Activated naive CD4-positive, alpha-beta T cell treated with anti-CD3 and anti-CD28 coated beads, Interleukin-2, amount 10 ng/mL, durations not matched to agents 7 days and 5 days (primary cell): ENCODE measurements at regions of chr20 and their contacts with region 1.

Region 1: GRCh38 chr20:2523919-2524708 is 12.3 kb upstream of the TMC2 start:
- DNase-seq: peak; percentile 94
- H3K4me3 Mint-ChIP-seq: peak overlapping the region; percentile 85
- H3K27ac Mint-ChIP-seq: peak overlapping the region; percentile 88
- H3K4me1 Mint-ChIP-seq: peaks cover 25% of the 10 kb centered on the region
- H3K27me3 Mint-ChIP-seq: peaks cover 50% of the 10 kb centered on the region

Region 2: DNA sequence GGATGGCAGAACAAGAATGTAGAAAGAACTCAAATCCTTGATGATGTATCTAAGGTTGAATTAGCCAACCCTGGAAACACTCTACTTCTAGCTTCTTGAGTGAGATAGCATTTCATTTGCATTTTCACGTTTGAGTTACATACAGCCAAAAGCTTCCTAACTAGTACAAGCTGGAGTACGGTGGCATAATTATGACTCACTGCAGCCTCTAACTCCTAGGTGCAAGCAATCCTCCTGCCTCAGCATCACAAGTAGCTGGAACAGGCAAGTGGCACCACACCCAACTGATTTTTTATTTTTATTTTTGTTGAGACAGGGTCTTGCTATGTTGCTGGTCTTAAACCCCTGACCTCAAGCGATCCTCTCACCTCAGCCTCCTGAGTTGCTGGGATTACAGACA is 459.0 kb before region 1 on chr20:
- CTCF ChIA-PET with region 1: no interaction called
- DNase-seq: no peak
- H3K4me3 Mint-ChIP-seq: no peak overlapping the region
- H3K27ac Mint-ChIP-seq: no peak overlapping the region
- H3K4me1 Mint-ChIP-seq: no peaks in the 10 kb centered on the region
- H3K27me3 Mint-ChIP-seq: peaks cover 8% of the 10 kb centered on the region

Region 3: GRCh38 chr20:2470423-2471193 is 53.5 kb before region 1 on chr20 and contains the start of gene SNRPB:
- CTCF ChIA-PET with region 1: interaction called, 30 read pairs
- DNase-seq: peak; percentile 98
- H3K4me3 Mint-ChIP-seq: peak within 1 kb of the TSS; percentile 93
- H3K27ac Mint-ChIP-seq: peak within 1 kb of the TSS; percentile 97
- H3K4me1 Mint-ChIP-seq: peaks cover 47% of the 10 kb centered on the region
- H3K27me3 Mint-ChIP-seq: no peaks in the 10 kb centered on the region

Region 4: DNA sequence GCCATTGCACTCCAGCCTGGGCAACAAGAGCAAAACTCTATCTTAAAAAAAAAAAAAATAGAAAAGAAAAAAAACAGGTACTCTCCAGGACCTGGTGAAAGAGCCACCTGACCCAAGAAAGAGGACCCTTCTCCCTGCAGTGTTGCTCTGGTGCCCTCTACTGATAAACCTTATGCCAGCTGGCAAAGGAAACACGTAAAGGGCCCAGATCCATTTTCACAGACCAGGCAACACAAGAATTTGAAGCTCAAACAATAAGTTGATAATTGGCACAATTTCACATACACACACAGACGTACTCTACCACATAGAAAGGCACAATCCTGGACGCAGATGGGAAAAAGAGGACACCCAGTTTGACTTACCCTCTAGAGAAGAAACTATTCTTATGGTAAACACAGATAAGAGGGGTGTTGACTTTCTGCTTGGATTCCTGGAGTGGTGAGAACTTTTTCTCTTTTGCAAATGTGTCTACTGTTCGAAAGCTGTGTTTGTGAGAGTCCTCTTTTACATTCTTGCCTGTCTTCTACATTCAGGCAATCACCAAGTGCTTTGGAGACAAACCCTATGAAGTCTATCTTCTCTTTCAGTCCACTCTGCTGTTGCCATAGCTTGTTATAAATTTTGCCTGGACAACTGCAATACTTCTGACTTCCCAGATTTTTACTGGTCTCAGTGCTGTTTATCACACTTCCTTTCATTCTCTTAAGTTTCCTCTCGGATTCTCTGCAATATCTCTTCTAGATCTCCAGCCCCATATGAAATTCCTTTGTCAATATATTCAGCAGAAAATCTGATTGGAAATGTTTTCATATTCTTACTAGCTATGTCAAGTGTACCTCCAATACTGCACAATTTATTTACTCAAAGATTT is 47.1 kb before region 1 on chr20:
- CTCF ChIA-PET with region 1: interaction called, 10 read pairs
- DNase-seq: no peak
- H3K4me3 Mint-ChIP-seq: no peak overlapping the region
- H3K27ac Mint-ChIP-seq: no peak overlapping the region
- H3K4me1 Mint-ChIP-seq: peaks cover 6% of the 10 kb centered on the region
- H3K27me3 Mint-ChIP-seq: no peaks in the 10 kb centered on the region

Region 5: DNA sequence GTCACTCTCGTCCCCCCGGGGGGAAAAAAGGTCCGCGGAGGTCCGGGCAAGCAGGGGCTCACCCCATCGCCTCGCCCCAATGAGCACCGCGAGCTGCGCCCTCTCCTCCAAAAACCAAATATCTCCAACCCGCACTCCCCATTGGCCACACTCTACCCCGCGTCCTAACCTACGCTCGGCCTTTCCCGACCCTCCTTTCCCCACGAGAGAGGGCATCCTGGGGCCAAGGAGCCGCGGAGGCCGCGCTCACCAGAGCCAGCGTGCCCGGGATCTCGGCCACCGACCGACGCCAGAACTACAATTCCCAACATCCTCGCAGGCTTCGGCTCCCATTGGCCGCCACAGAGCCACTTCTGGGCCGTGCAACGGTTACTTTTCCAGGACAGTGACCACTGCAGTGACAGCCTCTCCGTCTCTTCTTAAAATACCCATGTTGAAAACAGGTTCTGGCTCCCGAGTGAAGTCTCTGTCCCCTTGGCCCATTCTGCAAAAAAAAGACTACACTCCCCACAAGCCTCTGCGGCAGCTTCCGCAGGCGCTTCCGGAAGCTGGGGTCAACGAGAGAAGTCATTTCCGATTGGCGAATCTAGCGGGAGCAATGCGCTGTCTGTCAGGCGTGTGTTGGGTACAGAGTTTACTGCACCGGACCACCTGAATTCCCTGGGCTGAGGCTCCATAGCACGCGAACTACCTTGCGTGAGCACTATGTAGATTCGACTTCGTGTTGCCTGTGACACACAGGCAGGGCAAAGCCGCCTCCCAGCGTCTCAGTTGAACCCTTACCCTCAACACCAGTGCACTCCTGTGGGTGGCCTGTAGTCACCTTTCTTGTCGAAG is 15.3 kb before region 1 on chr20 and contains the start of gene ZNF343:
- CTCF ChIA-PET with region 1: interaction called, 82 read pairs
- DNase-seq: peak; percentile 86
- H3K4me3 Mint-ChIP-seq: peak within 1 kb of the TSS; percentile 98
- H3K27ac Mint-ChIP-seq: peak within 1 kb of the TSS; percentile 89
- H3K4me1 Mint-ChIP-seq: peaks cover 22% of the 10 kb centered on the region
- H3K27me3 Mint-ChIP-seq: peaks cover 15% of the 10 kb centered on the region

Region 6: DNA sequence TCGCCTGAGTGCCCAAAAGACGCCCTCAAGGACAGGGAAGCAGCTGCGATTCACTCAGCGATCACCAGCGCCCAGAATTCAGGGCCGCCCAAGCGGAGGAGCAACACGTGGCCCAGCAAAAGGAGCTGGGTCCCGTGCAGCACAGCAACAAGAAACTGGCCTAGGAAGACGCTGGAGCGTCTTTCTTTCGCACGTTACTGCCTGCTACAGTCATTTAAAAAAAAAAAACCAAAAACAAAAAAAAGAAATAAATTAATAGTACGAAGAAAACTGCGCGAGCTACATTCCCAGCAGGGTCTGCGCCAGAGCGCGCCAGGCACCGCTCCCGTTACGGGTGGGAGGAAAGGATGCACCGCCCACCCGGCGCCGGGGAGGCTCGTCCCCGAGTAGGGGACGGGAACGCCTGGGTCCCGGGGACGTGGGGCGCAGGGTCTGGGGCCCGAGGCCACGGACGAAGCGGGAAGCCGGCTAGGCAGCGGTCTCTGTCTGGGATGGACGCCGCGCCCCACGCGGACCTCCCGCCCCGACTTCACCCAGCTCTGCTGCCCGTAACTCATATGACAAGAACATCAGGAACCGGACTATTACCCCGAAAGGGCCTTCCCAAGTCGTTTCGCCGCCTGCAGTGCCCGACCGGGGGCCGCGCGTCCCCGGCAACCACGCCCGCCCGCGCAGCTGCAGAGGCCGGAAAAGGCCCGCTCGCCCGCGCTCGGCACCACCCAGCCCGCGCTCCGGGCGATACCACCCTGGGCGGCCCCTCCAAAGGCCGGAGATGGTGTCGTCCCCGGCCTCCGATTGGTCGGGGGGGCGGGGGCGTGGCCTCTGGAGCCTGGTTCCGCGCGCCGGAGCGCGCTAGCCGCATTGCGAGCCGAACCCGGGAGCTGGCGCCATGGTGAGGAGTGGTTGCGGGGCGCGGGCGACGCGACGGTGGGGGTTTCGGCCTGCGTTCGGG is 127.9 kb after region 1 on chr20 and contains the start of gene NOP56:
- CTCF ChIA-PET with region 1: interaction called, 18 read pairs
- DNase-seq: peak; percentile 92
- H3K4me3 Mint-ChIP-seq: peak within 1 kb of the TSS; percentile 89
- H3K27ac Mint-ChIP-seq: peak within 1 kb of the TSS; percentile 96
- H3K4me1 Mint-ChIP-seq: peaks cover 52% of the 10 kb centered on the region
- H3K27me3 Mint-ChIP-seq: no peaks in the 10 kb centered on the region